ENCODE measurements at regions of chr2 and their contacts with region 1.

Region 1: DNA sequence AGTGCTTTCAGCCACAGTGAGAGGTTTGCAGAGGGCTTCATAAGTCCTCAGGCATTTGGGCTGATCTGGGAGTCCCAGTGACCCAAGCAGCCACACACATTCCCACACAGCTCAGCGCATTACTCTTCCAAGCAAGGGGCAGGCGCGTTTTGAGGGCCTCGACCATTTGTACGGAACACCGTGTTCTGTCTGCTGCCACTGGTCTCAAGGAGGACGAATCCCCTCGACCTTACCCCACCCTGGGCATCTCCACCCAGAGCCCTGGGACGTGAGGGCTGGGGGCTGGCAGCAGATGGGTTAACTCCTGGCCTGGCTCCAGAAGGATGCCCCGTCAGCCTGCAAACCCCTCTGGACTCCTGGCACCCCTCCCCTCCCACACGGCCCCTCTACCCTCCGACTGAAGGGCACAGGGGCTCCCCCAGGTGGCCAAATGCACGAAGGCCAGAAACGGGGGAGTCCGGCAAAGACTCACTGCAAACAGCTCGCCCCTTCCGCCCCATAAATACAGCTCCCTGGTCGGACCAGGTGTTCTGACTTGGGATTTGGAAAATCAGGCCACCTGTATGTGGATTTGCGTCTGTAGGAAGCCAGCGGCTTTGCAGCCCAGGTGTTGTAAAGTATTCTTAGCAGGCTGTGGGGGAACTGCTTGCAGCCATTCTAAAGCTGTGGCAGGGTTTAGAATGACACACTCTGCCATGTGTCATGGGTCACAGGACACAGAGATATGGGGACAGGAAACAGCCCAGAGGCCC is 33.6 kb upstream of the PTMA start:
- DNase-seq: peak in 8 of 9 experiments; percentile 37 to 71 (median 58)
- ATAC-seq: peak; percentile 53
- H3K4me3 ChIP-seq: no peak overlapping the region
- H3K4me3 Mint-ChIP-seq: no peak overlapping the region
- H3K27ac ChIP-seq: no peak overlapping the region
- H3K27ac Mint-ChIP-seq: no peak overlapping the region
- H3K4me1 ChIP-seq: peaks cover 5% of the 10 kb centered on the region
- H3K4me1 Mint-ChIP-seq: peaks cover 6% of the 10 kb centered on the region
- H3K27me3 ChIP-seq: no peaks in the 10 kb centered on the region
- H3K27me3 Mint-ChIP-seq: peaks cover under 1% of the 10 kb centered on the region
- CTCF ChIP-seq: peak; percentile 52

Region 2: GRCh38 chr2:231612179-231613053 is 62.3 kb before region 1 on chr2:
- CTCF ChIA-PET with region 1: interaction called, 199 read pairs
- POLR2A ChIA-PET with region 1: interaction called, 5 read pairs
- intact Hi-C with region 1: loop called (anchors 1 kb)
- DNase-seq: peak; percentile 73 to 92 (median 88)
- ATAC-seq: peak; percentile 78
- H3K4me3 ChIP-seq: peak overlapping the region in 1 of 2 experiments; percentile 55
- H3K4me3 Mint-ChIP-seq: peak overlapping the region; percentile 88
- H3K27ac ChIP-seq: peak overlapping the region in 1 of 2 experiments; percentile 17
- H3K27ac Mint-ChIP-seq: peak overlapping the region; percentile 42
- H3K4me1 ChIP-seq: peaks cover 16% of the 10 kb centered on the region
- H3K4me1 Mint-ChIP-seq: peaks cover 23% of the 10 kb centered on the region
- H3K27me3 ChIP-seq: peaks cover 0 to 5% of the 10 kb centered on the region in 2 experiments
- H3K27me3 Mint-ChIP-seq: no peaks in the 10 kb centered on the region
- CTCF ChIP-seq: peak; percentile 82

Region 3: DNA sequence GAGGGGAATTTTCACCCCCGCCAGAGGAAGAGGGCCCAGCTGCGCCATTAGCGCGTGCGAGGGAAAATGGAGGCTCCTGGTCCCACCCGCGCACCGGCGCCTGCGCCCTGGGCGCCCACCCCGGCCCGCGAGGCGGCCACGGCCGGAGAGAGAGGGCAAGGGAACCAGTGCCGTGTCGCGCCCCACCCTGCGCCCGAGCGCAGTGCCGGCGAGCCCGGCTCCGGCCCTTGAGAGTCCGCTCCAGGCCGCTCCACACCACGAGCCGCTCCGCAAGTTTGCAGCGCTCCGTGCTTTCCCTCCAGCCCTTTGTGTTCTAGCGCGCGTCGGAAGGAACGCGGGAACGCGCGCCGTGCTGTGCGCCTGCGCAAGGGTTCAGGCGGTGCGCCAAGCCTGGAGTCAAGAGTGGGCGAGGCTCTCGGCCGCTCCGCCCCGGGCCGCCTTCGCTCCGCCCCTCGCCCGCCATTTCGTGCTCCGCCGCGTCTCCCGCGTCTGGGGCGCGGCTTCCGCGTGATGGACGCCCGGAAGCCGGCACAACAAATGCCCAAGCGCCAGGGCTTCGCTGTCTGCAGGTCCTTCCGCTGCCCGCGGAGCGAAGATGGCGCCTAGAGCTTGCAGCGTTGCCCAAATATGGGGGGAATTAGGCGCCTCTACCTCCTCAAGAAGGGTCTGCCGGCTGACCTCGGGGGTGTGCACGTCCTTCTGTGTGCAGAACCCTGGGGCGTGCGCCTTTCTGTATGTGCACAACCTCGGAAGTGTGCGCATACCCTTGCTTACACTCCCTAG is 12.5 kb before region 1 on chr2:
- CTCF ChIA-PET with region 1: interaction called, 16 read pairs
- POLR2A ChIA-PET with region 1: interaction called, 6 read pairs
- intact Hi-C with region 1: loop called in 1 of 2 experiments (anchors 1 kb)
- DNase-seq: peak; percentile 94 to 99 (median 96)
- ATAC-seq: peak; percentile 91
- H3K4me3 ChIP-seq: peak overlapping the region; percentile 60 to 82
- H3K4me3 Mint-ChIP-seq: peak overlapping the region; percentile 77
- H3K27ac ChIP-seq: peak overlapping the region; percentile 87 to 94
- H3K27ac Mint-ChIP-seq: peak overlapping the region; percentile 97
- H3K4me1 ChIP-seq: peaks cover 16% of the 10 kb centered on the region
- H3K4me1 Mint-ChIP-seq: peaks cover 14% of the 10 kb centered on the region
- H3K27me3 ChIP-seq: no peaks in the 10 kb centered on the region
- H3K27me3 Mint-ChIP-seq: no peaks in the 10 kb centered on the region
- CTCF ChIP-seq: no peak

Region 4: GRCh38 chr2:231696007-231696371 is 21.2 kb after region 1 on chr2:
- CTCF ChIA-PET with region 1: interaction called, 67 read pairs
- POLR2A ChIA-PET with region 1: interaction called, 3 read pairs
- intact Hi-C with region 1: no loop called
- DNase-seq: no peak
- ATAC-seq: no peak
- H3K4me3 ChIP-seq: no peak overlapping the region
- H3K4me3 Mint-ChIP-seq: no peak overlapping the region
- H3K27ac ChIP-seq: no peak overlapping the region
- H3K27ac Mint-ChIP-seq: no peak overlapping the region
- H3K4me1 ChIP-seq: no peaks in the 10 kb centered on the region
- H3K4me1 Mint-ChIP-seq: no peaks in the 10 kb centered on the region
- H3K27me3 ChIP-seq: no peaks in the 10 kb centered on the region
- H3K27me3 Mint-ChIP-seq: no peaks in the 10 kb centered on the region
- CTCF ChIP-seq: no peak

Region 5: GRCh38 chr2:231706731-231707624 is 32.2 kb after region 1 on chr2:
- CTCF ChIA-PET with region 1: interaction called, 783 read pairs
- POLR2A ChIA-PET with region 1: interaction called, 12 read pairs
- intact Hi-C with region 1: no loop called
- DNase-seq: peak; percentile 93 to 99 (median 97)
- ATAC-seq: peak; percentile 50
- H3K4me3 ChIP-seq: peak overlapping the region; percentile 85 to 92
- H3K4me3 Mint-ChIP-seq: peak overlapping the region; percentile 98
- H3K27ac ChIP-seq: peak overlapping the region; percentile 95 to 97
- H3K27ac Mint-ChIP-seq: peak overlapping the region; percentile 100
- H3K4me1 ChIP-seq: peaks cover 25% of the 10 kb centered on the region
- H3K4me1 Mint-ChIP-seq: peaks cover 31% of the 10 kb centered on the region
- H3K27me3 ChIP-seq: no peaks in the 10 kb centered on the region
- H3K27me3 Mint-ChIP-seq: no peaks in the 10 kb centered on the region
- CTCF ChIP-seq: peak; percentile 83

Region 6: DNA sequence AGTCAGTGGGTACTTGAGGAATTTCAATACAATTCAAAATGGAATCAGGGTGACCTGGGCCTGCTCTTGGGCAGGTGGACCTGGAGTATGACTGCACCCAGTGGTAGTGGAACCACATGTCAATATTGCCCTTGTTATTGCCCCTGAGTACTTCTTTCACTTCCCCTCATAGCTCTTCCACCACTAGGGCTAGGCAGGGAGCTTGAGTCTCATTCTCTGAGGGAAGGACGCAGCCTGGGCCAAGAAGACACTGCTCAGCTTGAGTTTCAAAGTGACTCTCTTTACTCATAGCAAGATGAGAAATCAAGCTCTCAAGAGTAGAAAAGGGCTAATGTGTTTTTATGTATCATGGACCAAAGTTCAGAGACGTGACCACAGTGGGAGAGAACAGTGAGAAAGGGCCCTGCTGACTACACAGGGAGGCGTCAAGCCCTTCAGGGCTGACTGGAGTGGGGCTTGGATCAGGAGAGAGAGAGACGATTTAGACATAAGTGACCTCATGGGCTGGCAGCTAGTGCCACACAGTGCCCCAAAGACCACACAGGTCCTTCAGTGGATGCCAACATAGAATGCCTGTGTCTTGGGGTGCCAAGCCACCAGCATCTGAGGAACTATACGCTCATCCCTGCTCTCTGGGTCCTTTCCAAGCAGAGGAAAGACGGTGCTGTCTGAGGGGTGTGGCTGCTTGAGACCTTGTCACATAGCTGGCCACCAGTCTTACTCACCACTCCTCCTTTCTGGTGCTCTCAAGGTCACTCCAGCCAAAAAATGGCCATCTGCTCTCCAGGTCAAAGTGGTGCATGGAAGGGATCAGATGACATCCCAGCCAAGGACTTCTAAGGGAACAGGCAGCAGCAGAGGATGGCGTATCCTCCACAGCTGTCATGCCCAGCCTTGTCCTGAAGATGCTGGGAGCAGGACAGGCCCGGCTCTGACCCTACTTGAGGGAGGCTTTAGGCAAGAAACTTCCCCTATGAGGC is 46.5 kb after region 1 on chr2:
- CTCF ChIA-PET with region 1: interaction called, 783 read pairs
- POLR2A ChIA-PET with region 1: interaction called, 3 read pairs
- intact Hi-C with region 1: no loop called
- DNase-seq: peak in 1 of 9 experiments; percentile 23
- ATAC-seq: no peak
- H3K4me3 ChIP-seq: no peak overlapping the region
- H3K4me3 Mint-ChIP-seq: no peak overlapping the region
- H3K27ac ChIP-seq: no peak overlapping the region
- H3K27ac Mint-ChIP-seq: no peak overlapping the region
- H3K4me1 ChIP-seq: no peaks in the 10 kb centered on the region
- H3K4me1 Mint-ChIP-seq: no peaks in the 10 kb centered on the region
- H3K27me3 ChIP-seq: no peaks in the 10 kb centered on the region
- H3K27me3 Mint-ChIP-seq: no peaks in the 10 kb centered on the region
- CTCF ChIP-seq: no peak

Measured in CD8-positive, alpha-beta T cell (primary cell).